ENCODE measurements at regions of chr14 and their contacts with region 1.

Region 1: GRCh38 chr14:22358726-22359125 is 230.3 kb downstream of the DAD1 start:
- DNase-seq: no peak
- ATAC-seq: no peak
- H3K4me3 ChIP-seq: no peak overlapping the region
- H3K27ac ChIP-seq: no peak overlapping the region
- H3K4me1 ChIP-seq: no peaks in the 10 kb centered on the region
- H3K27me3 ChIP-seq: no peaks in the 10 kb centered on the region; the same call in 1 of the 2 replicates
- CTCF ChIP-seq: no peak
- POLR2A ChIP-seq: no peak
- RAD21 ChIP-seq: no peak

Region 2: DNA sequence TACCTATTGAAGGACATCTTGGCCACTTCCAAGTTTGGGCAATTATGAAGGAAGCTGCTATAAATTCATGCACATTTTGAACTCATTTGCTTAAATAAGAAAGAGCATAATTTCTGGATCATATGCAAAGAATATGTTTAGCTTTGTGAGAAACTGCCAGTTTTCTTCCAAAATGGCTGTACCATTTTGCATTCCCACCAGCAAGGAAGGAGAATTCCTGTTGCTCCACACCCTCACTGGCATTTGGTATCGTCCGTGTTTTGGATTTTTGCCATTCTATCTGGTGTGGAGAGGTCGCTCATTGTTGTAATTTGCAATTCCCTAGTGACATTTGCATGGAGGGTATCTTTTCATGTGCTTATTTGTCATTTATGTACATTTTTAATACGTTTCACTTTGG is 109.0 kb before region 1 on chr14:
- CTCF ChIA-PET with region 1: no interaction called
- POLR2A ChIA-PET with region 1: no interaction called
- dilution Hi-C with region 1: no loop called
- in situ Hi-C with region 1: no loop called
- intact Hi-C with region 1: no loop called
- DNase-seq: no peak
- ATAC-seq: no peak
- H3K4me3 ChIP-seq: no peak overlapping the region
- H3K27ac ChIP-seq: no peak overlapping the region
- H3K4me1 ChIP-seq: peaks cover 11% of the 10 kb centered on the region
- H3K27me3 ChIP-seq: no peaks in the 10 kb centered on the region
- CTCF ChIP-seq: no peak
- POLR2A ChIP-seq: no peak
- RAD21 ChIP-seq: no peak

Region 3: GRCh38 chr14:23344442-23344841 is 985.7 kb after region 1 on chr14:
- CTCF ChIA-PET with region 1: no interaction called
- POLR2A ChIA-PET with region 1: no interaction called
- dilution Hi-C with region 1: no loop called
- in situ Hi-C with region 1: no loop called
- intact Hi-C with region 1: loop called (anchors 5 kb)
- DNase-seq: no peak
- ATAC-seq: no peak
- H3K4me3 ChIP-seq: no peak overlapping the region
- H3K27ac ChIP-seq: no peak overlapping the region
- H3K4me1 ChIP-seq: no peaks in the 10 kb centered on the region
- H3K27me3 ChIP-seq: peaks cover 2% of the 10 kb centered on the region; the same call in 1 of the 2 replicates
- CTCF ChIP-seq: no peak
- POLR2A ChIP-seq: no peak
- RAD21 ChIP-seq: no peak